AG04449 (cell line): ENCODE measurements at regions of chr11 and their contacts with region 1.

Region 1: DNA sequence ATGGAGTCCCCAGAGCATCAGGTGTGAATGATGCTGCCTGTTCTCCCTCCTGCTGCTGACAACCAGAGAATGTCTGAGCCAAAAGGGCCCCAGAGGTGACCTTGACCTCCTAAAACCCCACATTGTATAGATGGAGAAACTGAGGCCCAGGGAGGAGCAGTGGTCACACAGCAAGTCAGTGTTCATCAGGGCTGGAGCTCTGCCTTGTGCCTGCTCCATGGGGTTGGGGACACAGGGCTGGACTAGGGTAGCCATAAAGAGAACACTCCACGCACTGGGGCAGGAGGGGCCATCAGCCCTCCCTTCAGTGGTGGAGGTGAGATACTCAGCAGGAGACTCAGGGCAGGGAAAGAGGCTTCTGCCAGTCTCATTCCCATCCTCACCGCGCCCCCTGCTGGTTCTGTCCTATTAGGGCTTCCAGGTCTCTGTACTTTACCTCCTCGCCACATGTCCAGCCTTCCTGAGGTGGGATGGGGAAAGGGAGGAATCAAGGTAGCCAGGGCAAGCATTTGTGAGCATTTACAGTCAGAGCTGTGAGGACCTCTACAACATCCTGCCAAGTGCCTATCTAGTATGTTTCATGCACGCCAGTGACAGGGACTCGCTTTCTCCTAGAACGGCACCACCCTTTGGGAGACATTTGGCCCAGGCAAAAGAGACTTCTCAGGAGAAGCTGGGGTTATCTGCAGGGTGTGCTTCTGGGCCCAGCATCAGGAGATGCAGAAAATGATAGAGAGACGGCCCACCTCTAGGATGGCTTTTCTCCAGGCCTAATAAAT is 43.2 kb downstream of the NEU3 start:
- DNase-seq: no peak
- H3K4me3 ChIP-seq: no peak overlapping the region
- CTCF ChIP-seq: peak; percentile 93

Region 2: DNA sequence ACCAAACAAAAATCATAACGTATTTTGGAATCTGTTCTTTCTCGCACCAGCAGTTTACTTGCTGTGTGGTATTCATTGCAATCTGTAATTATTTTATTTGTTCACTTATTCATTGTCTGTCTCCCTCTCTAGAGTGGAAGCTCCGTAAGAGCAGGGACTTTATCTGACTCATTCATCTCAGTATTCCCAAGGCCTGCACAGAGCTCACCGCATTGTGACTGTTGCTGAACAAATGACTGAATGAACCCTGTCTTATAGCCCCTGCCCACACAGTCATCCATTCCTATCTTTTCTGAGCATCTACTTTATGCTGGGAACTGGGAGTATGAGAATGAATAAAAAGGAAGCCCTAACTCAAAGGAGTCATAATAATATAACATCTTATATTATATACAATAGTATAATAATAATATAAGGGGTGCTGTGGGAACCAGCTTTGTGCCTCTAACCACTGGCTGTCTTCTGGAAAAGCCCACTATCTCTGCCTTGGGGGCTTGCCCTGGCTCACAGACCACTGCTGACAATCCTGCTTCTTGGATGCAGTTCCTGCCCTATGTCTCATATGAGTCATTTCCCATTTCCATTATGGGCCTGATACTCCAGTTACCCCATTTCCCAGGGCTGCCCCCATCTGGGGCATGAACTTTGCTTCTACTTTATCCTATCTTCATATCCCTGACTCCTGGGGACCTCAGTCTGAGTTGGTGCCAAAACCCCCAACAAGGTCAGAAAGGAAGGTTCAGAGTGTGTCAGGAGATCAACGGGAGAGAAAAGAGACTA is 94.1 kb before region 1 on chr11:
- CTCF ChIA-PET with region 1: interaction called, 127 read pairs
- POLR2A ChIA-PET with region 1: no interaction called
- DNase-seq: no peak
- H3K4me3 ChIP-seq: no peak overlapping the region
- CTCF ChIP-seq: no peak

Region 3: DNA sequence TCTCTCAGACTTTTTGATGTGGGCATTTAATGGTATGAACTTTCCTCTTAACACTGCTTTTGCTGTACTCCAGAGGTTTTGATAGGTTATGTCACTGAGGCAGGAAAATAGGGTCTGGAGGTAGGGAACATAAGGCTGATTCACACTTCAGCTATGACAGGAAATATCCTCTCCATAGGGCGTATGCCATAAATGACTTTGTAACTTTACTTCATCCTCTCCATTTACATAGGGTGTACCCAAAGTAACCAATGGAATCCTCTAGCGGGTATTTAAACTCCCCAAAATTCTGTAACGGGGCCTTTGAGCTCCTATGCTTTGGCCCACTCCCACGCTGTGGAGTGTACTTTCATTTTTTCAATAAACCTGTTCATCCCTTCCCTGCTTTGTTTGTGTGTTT is 15.2 kb after region 1 on chr11:
- CTCF ChIA-PET with region 1: interaction called, 13 read pairs
- POLR2A ChIA-PET with region 1: no interaction called
- DNase-seq: no peak
- H3K4me3 ChIP-seq: no peak overlapping the region
- CTCF ChIP-seq: no peak

Region 4: DNA sequence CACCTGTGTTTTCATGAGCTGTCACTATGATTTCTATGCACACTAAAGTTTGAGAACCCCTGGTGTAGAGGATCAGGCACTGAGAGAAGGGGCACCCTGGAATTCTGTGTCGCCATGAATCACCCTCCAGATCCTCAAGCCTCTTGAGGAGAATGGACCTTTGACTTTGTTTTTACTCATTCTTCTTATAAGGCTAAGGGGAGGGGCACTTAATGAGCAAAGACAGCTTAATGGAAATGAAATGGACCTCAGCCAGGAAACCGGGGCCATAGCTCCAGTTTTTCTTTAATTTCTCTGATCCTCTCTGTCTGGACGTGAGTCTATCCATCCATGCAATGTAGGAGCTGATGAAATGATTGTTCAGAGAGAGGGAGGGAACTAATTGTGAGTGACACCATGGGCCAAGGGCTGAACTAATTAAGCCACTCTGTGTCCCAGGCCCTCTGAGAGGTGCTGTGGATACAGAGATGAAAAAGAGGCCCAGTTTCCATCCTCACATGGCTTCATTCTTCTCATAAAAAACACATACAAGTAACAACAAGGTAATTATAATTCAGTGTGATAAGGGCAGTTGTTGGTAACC is 31.9 kb after region 1 on chr11:
- CTCF ChIA-PET with region 1: interaction called, 12 read pairs
- POLR2A ChIA-PET with region 1: no interaction called
- DNase-seq: no peak
- H3K4me3 ChIP-seq: no peak overlapping the region
- CTCF ChIP-seq: no peak